Naive thymus-derived CD4-positive, alpha-beta T cell (primary cell): ENCODE measurements at regions of chr11 and their contacts with region 1.

Region 1: GRCh38 chr11:727859-728748 is 19.2 kb upstream of the TALDO1 start:
- DNase-seq: peak; percentile 52 to 86 (median 71)
- ATAC-seq: peak; percentile 93
- H3K4me3 ChIP-seq: no peak overlapping the region
- H3K4me3 Mint-ChIP-seq: no peak overlapping the region
- H3K27ac ChIP-seq: no peak overlapping the region
- H3K27ac Mint-ChIP-seq: no peak overlapping the region
- H3K4me1 ChIP-seq: peaks cover 11 to 17% of the 10 kb centered on the region in 2 donors
- H3K4me1 Mint-ChIP-seq: peaks cover 4 to 11% (median 8%) of the 10 kb centered on the region in 7 donors
- H3K27me3 ChIP-seq: no peaks in the 10 kb centered on the region
- H3K27me3 Mint-ChIP-seq: peaks cover 0 to 8% (median 4%) of the 10 kb centered on the region in 5 donors

Region 2: DNA sequence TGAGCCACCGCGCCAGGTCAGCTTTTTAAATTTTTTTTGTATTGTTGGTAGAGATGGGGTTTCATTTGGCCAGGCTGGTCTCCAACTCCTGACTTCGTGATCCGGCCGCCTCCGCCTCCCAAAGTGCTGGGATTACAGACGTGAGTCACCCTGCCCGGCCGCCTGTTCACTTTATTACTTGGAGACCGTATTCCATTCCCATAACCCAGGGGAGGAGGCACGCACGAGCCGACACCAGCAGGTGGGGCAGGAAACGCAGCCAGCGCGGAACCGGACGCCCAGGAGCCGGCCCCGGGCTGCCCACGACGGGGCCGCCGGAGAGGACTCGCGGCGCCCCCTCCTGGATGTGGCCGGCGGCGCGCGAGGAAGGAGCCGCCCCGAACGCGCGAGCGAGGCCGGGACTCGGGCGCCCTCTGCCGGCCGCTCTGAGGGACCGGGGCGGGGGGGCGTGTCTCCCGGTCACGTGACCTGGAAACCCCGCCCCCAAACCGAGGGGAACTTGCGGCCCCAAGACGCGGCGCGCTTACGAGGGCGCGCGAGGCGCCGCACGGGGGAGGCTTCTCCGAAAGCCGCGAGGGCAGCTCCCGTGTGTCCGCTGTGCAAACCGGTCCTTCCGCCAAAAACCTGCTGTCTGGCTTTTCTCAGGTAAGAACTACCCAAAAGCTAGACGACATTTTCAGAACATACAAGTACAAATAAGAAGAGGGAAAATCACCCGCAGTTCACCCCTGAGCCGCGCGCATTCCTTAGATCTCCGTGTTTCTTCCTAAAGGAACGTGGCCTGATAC is 209.4 kb before region 1 on chr11:
- CTCF ChIA-PET with region 1: no interaction called
- POLR2A ChIA-PET with region 1: no interaction called
- intact Hi-C with region 1: no loop called
- DNase-seq: peak; percentile 69 to 94 (median 87)
- ATAC-seq: peak; percentile 99
- H3K4me3 ChIP-seq: peak overlapping the region; percentile 28
- H3K4me3 Mint-ChIP-seq: peak overlapping the region; percentile 81 to 91 (median 87)
- H3K27ac ChIP-seq: peak overlapping the region; percentile 58
- H3K27ac Mint-ChIP-seq: peak overlapping the region; percentile 70 to 92 (median 85)
- H3K4me1 ChIP-seq: peaks cover 4% of the 10 kb centered on the region in 2 donors
- H3K4me1 Mint-ChIP-seq: peaks cover 2 to 8% (median 4%) of the 10 kb centered on the region in 7 donors
- H3K27me3 ChIP-seq: no peaks in the 10 kb centered on the region
- H3K27me3 Mint-ChIP-seq: no peaks in the 10 kb centered on the region

Region 3: DNA sequence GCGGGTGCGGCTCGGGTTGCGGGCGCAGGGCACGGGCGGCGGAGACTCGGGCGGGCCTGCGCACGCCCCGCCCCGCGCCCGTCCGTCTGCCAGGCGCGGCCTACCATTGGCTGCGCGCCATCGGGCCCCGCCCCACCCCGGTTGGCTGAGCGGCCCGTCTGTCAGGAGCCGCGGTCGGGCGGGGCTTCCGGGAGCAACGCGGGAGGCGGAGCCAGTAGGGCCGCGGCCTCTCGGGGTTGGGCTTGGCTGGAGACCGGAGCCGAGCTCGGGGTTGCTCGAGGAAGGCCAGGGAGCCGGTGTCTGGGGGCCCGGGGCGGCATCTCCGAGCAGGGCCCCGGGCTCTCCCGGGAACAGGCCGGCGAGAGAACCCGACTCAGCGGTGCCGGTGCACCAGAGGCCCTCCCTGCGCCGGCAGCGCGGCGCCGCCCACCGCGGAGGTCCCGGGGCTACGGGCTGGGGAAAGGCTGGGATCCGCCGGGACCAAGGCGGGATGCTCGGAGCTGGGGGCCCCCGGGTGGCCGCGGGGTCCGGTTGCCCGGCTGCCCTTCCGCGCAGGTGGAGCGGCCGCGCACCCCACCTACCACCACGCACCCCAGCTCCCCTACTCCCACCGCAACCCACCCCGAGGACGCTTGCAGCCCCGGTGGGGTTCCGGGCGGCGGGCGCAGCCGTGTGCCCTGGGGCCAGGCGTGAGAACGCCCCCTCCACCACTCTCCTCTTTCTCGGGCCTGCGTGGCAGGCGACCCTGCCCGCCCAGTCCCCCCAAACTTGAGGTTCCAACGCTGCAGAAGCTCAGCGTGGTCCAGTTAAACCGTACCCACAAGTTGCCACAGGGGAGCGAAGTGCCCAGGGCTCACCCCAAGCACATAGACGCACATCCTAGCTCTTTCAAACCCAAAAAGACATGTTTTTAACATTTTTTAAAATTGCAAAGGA is 192.3 kb before region 1 on chr11 and contains the start of gene HRAS:
- CTCF ChIA-PET with region 1: interaction called, 4 read pairs
- POLR2A ChIA-PET with region 1: interaction called, 6 read pairs
- intact Hi-C with region 1: loop called (anchors 1 to 5 kb)
- DNase-seq: peak; percentile 92 to 99 (median 96)
- ATAC-seq: peak; percentile 93
- H3K4me3 ChIP-seq: peak within 1 kb of the TSS; percentile 66
- H3K4me3 Mint-ChIP-seq: peak within 1 kb of the TSS; percentile 87 to 97 (median 91)
- H3K27ac ChIP-seq: peak within 1 kb of the TSS; percentile 75
- H3K27ac Mint-ChIP-seq: peak within 1 kb of the TSS; percentile 84 to 96 (median 91)
- H3K4me1 ChIP-seq: peaks cover 20 to 21% of the 10 kb centered on the region in 2 donors
- H3K4me1 Mint-ChIP-seq: peaks cover 5 to 16% (median 11%) of the 10 kb centered on the region in 7 donors
- H3K27me3 ChIP-seq: no peaks in the 10 kb centered on the region
- H3K27me3 Mint-ChIP-seq: no peaks in the 10 kb centered on the region
- total RNA-seq, gene HRAS: 22.3 to 52.0 (median 31.9) TPM

Region 4: DNA sequence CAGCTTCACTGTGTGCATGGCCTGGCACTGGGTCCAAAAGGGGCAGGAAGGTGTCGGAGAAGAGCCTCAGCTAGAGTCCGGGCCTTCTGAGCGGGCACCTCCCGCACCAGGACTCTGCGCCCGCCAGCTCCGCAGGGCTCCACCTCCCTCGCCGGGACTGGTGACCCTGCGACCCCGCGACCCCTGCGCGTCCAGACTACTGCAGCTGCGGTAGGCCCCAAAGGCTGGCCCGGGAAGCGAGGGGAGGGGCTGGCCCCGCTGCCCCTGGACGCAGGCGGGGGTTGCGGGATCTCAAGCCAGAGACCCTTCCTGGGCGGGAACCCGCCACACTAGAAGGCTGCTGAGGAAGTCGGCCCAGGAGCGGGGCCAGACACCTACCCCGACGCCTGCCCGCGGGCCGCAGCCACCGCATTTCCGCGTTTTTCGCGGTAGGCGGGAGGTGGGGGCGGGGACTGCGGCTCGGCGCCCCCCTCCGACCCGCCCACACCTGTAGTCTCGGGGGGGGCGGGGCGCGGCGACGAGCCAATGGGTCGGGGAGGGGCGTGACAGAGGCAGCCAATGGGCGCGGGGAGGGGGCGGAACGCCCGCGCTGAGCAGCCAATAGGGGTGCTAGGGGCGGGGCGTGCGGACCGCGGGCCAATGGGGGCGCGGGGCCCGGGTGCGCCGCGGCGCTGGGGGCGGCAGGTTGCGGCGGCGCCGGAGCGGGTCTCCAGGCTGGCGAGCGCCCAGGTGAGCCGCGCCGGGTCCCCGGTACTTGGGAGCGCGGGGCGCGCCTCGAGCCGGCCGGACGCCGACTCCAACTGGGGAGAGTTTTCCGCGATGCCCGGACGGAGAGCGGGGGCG is 167.6 kb before region 1 on chr11 and contains the starts of genes LMNTD2 and RASSF7:
- CTCF ChIA-PET with region 1: interaction called, 41 read pairs
- POLR2A ChIA-PET with region 1: interaction called, 68 read pairs
- intact Hi-C with region 1: loop called (anchors 1 to 2 kb)
- DNase-seq: peak; percentile 89 to 98 (median 94)
- ATAC-seq: peak; percentile 98
- H3K4me3 ChIP-seq: peak within 1 kb of the TSS; percentile 68
- H3K4me3 Mint-ChIP-seq: peak within 1 kb of the TSS; percentile 78 to 94 (median 89)
- H3K27ac ChIP-seq: peak within 1 kb of the TSS; percentile 82
- H3K27ac Mint-ChIP-seq: peak within 1 kb of the TSS; percentile 35 to 93 (median 84)
- H3K4me1 ChIP-seq: peaks cover 14 to 17% of the 10 kb centered on the region in 2 donors
- H3K4me1 Mint-ChIP-seq: peaks cover 4 to 17% (median 9%) of the 10 kb centered on the region in 7 donors
- H3K27me3 ChIP-seq: no peaks in the 10 kb centered on the region
- H3K27me3 Mint-ChIP-seq: peaks cover 0 to 18% (median 0%) of the 10 kb centered on the region in 5 donors
- total RNA-seq, gene LMNTD2: 2.8 to 14.7 (median 9.6) TPM
- total RNA-seq, gene RASSF7: 20.0 to 45.4 (median 35.5) TPM

Region 5: DNA sequence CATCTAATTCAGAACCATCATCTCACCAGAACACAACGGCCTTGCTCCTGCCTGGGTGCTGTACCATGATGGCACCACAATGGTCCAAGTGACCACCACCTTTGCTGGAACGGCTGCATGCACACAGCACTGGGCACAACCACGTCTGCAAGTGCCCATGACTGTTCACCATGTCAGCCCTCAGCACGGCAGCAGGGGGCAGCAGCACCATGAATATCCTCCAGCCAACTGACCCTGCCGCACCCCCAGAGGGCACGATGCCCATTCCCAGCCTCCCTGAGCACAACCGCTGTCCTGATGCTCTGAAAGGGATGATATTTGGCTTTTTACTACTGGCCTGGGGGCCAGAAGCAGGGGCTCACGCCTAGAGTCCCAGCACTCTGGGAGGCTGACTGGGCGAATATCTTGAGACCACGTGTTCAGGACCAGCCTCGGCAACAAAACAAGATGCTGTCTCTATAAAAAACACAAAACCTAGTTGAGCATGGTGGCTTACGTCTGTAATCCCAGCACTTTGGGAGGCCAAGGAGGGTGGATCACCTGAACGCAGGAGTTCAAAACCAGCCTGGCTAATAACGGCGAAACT is 65.3 kb before region 1 on chr11:
- CTCF ChIA-PET with region 1: interaction called, 10 read pairs
- POLR2A ChIA-PET with region 1: no interaction called
- intact Hi-C with region 1: loop called (anchors 1 kb)
- DNase-seq: peak in 6 of 9 donors; percentile 24 to 48 (median 32)
- ATAC-seq: peak; percentile 86
- H3K4me3 ChIP-seq: no peak overlapping the region
- H3K4me3 Mint-ChIP-seq: no peak overlapping the region
- H3K27ac ChIP-seq: no peak overlapping the region
- H3K27ac Mint-ChIP-seq: peak overlapping the region in 1 of 9 donors; percentile 46
- H3K4me1 ChIP-seq: no peaks in the 10 kb centered on the region
- H3K4me1 Mint-ChIP-seq: peaks cover 0 to 7% (median 2%) of the 10 kb centered on the region in 7 donors
- H3K27me3 ChIP-seq: no peaks in the 10 kb centered on the region
- H3K27me3 Mint-ChIP-seq: no peaks in the 10 kb centered on the region

Region 6: GRCh38 chr11:680476-680875 is 47.6 kb before region 1 on chr11:
- CTCF ChIA-PET with region 1: no interaction called
- POLR2A ChIA-PET with region 1: no interaction called
- intact Hi-C with region 1: no loop called
- DNase-seq: no peak
- ATAC-seq: no peak
- H3K4me3 ChIP-seq: no peak overlapping the region
- H3K4me3 Mint-ChIP-seq: no peak overlapping the region
- H3K27ac ChIP-seq: no peak overlapping the region
- H3K27ac Mint-ChIP-seq: peak overlapping the region in 1 of 9 donors; percentile 11
- H3K4me1 ChIP-seq: no peaks in the 10 kb centered on the region
- H3K4me1 Mint-ChIP-seq: peaks cover 0 to 4% (median 0%) of the 10 kb centered on the region in 7 donors
- H3K27me3 ChIP-seq: no peaks in the 10 kb centered on the region
- H3K27me3 Mint-ChIP-seq: no peaks in the 10 kb centered on the region

Region 7: DNA sequence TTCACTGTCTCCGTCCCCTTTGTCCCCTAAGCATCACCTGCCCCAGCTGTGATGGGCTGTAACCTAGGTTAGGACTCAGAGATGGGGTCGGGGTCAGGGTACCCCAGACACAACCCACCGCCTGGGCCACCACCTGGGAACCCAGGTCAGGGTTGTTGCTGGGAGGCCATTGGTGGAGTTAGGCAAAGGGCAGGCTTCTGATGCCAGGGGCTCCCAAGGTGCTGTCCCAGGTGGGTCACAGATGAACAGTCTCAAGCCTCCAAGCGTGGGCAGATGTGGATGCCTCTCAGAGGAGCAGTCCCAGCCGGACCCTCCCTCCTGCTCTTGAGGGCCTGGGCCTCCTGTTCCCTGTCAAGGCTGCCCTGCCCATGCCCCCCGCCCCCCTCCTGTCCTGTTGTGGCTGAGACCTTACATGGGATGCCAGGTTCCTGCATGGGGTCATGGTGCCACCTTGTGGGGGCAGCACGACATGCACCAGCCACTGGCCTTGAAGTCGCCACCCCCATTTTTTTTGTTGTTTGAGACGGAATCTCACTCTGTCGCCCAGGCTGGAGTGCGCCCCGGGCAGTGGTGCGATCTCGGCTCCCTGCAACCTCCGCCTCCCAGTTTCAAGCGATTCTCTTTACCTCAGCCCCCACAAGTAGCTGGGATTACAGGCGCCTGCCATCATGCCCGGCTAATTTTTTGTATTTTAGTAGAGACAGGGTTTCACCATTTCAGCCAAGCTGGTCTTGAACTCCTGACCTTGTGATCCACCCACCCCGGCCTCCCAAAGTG is 37.1 kb after region 1 on chr11:
- CTCF ChIA-PET with region 1: interaction called, 5 read pairs
- POLR2A ChIA-PET with region 1: no interaction called
- intact Hi-C with region 1: loop called (anchors 1 kb)
- DNase-seq: peak; percentile 47 to 74 (median 68)
- ATAC-seq: peak; percentile 92
- H3K4me3 ChIP-seq: no peak overlapping the region
- H3K4me3 Mint-ChIP-seq: no peak overlapping the region
- H3K27ac ChIP-seq: no peak overlapping the region
- H3K27ac Mint-ChIP-seq: peak overlapping the region in 5 of 9 donors; percentile 40 to 85 (median 64)
- H3K4me1 ChIP-seq: no peaks in the 10 kb centered on the region
- H3K4me1 Mint-ChIP-seq: peaks cover 0 to 7% (median 0%) of the 10 kb centered on the region in 7 donors
- H3K27me3 ChIP-seq: no peaks in the 10 kb centered on the region
- H3K27me3 Mint-ChIP-seq: no peaks in the 10 kb centered on the region